AG04449 (cell line): ENCODE measurements at regions of chr14 and their contacts with region 1.

Region 1: GRCh38 chr14:68795597-68796417 is 2.9 kb upstream of the ZFP36L1 start:
- DNase-seq: no peak
- H3K4me3 ChIP-seq: peak overlapping the region; percentile 99
- CTCF ChIP-seq: peak; percentile 80

Region 2: DNA sequence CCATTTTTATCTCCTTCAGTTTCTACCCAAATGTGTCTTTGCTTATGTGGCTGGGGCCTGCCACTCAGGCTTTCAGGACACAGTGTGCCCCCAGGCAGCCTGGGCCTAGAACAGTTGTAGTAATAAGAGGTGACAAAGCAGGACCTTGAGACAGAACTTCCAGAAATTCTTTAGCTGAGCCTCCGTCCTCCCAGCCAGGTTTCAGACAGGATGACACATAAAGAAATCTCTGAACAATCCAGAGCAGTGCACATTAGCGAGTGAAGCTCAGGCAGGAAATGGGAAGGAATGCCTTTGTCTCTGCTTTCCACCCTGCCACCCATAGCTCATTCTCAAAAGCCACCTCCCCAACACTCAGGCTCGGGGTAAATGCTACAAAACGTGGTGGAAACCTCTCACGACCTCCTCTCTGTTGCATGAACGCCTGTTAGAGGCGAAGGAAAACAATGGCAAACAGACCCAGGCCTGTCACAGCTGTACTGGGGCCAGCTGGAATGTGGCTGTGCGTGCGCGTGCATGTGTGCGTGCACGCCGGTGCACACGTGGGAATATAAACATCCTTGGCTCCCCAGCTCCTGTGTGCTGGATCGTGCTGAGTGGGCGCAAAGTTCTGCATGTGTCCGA is 289.7 kb before region 1 on chr14:
- CTCF ChIA-PET with region 1: no interaction called
- POLR2A ChIA-PET with region 1: interaction called, 14 read pairs
- DNase-seq: peak; percentile 21
- H3K4me3 ChIP-seq: no peak overlapping the region
- CTCF ChIP-seq: no peak

Region 3: GRCh38 chr14:68685419-68686204 is 110.2 kb before region 1 on chr14:
- CTCF ChIA-PET with region 1: interaction called, 3 read pairs
- POLR2A ChIA-PET with region 1: interaction called, 41 read pairs
- DNase-seq: no peak
- H3K4me3 ChIP-seq: no peak overlapping the region
- CTCF ChIP-seq: no peak

Region 4: GRCh38 chr14:68780358-68781160 is 15.2 kb before region 1 on chr14:
- CTCF ChIA-PET with region 1: interaction called, 5 read pairs
- POLR2A ChIA-PET with region 1: interaction called, 46 read pairs
- DNase-seq: no peak
- H3K4me3 ChIP-seq: no peak overlapping the region; the same call in 1 of the 2 replicates
- CTCF ChIP-seq: no peak